Activated CD4-positive, alpha-beta T cell treated with anti-CD3 and anti-CD28 coated beads, Interleukin-2, amount 10 ng/mL, durations not matched to agents 24 days and 14 days (primary cell): ENCODE measurements at regions of chr5 and their contacts with region 1.

Region 1: DNA sequence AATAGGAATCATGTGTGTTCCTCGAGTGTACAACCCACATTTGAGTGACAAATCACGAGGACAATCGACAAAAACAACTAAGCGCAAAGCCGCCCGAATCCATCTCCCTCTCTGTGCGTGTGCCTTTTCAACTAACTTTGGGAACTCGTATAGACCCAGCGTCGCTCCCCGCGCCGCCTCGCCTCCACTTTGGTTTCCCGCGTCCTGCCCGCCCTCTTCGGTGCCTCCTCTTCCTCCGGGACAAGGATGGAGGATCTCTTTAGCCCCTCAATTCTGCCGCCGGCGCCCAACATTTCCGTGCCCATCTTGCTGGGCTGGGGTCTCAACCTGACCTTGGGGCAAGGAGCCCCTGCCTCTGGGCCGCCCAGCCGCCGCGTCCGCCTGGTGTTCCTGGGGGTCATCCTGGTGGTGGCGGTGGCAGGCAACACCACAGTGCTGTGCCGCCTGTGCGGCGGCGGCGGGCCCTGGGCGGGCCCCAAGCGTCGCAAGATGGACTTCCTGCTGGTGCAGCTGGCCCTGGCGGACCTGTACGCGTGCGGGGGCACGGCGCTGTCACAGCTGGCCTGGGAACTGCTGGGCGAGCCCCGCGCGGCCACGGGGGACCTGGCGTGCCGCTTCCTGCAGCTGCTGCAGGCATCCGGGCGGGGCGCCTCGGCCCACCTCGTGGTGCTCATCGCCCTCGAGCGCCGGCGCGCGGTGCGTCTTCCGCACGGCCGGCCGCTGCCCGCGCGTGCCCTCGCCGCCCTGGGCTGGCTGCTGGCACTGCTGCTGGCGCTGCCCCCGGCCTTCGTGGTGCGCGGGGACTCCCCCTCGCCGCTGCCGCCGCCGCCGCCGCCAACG is at the start of gene GPR150:
- DNase-seq: peak; percentile 90
- H3K4me3 Mint-ChIP-seq: peak within 1 kb of the TSS; percentile 91
- H3K27ac Mint-ChIP-seq: peak within 1 kb of the TSS; percentile 67
- H3K4me1 Mint-ChIP-seq: peaks cover 35% of the 10 kb centered on the region
- H3K27me3 Mint-ChIP-seq: peaks cover 16% of the 10 kb centered on the region
- total RNA-seq, gene GPR150: 0.33 and 0.56 TPM in 2 replicates

Region 2: DNA sequence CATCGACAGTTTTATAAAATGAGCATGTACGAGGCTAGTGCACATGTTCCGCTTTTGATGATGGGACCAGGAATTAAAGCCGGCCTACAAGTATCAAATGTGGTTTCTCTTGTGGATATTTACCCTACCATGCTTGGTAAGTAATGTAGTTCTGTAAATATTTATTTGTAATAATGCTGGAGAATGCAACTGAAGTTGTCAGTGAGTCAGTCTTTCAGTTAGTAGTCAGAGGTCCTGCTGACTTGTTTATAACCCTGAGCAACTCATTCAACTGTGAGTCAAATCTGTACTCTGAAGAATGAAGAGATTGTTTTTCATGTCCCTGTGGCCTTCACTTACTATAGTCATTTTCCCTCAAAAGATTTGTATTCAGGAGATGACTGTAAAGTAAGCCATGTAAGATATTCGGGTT is 28.8 kb before region 1 on chr5:
- intact Hi-C with region 1: loop called (anchors 1 kb)
- DNase-seq: no peak
- H3K4me3 Mint-ChIP-seq: no peak overlapping the region
- H3K27ac Mint-ChIP-seq: peak overlapping the region; percentile 39
- H3K4me1 Mint-ChIP-seq: peaks cover 20% of the 10 kb centered on the region
- H3K27me3 Mint-ChIP-seq: no peaks in the 10 kb centered on the region

Region 3: DNA sequence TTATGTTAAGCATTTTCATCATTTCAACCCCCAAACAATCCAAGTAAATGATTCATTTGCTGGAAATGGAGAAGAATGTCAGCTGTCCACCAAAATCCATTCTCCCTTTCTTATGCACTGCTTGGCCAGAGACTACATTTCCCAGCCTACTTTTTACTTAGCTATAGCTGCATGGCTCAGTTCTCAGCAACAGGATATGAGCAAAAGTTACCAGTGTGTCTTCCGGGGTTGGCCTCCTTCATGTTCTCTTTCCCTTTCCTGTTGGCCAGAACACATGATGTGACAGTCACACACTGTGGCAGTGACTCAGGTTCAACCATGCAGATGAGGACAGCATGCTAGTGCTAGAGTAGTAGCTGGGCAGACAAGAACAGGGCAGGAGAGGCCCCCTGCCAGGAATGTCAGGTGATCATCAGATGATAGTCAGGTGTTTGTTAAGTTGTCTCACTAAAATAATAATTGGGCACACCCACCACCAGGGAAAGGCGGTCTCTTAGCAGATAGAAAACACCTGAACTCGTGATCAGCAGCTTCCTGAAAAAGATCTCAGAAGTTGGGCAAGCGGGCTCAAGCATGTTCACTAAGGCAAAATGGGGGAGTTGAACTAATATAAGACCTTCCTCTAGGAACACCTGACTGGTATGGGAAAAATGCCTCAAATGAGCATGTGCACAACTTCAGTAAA is 11.9 kb after region 1 on chr5:
- intact Hi-C with region 1: loop called (anchors 1 kb)
- DNase-seq: peak; percentile 88
- H3K4me3 Mint-ChIP-seq: peak overlapping the region; percentile 28
- H3K27ac Mint-ChIP-seq: peak overlapping the region; percentile 92
- H3K4me1 Mint-ChIP-seq: peaks cover 14% of the 10 kb centered on the region
- H3K27me3 Mint-ChIP-seq: peaks cover 9% of the 10 kb centered on the region

Region 4: DNA sequence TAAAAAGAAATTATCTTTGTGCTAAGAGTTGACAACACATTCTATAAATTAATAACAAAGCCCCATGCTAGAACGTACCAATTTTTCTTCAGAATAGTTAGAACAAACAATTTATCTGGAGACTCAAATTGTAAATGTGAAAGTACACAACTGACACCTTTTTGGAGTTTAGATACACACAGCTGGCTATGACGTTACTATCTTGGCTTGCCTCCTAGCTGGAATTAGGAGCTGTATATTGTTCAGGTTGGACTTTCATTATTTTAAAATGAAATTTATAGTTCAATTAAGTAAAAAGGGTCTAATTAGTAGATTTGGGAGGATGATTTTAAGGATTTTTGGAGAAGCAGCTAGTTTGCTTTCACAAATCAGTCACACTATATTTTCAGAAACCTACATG is 1956.7 kb after region 1 on chr5:
- intact Hi-C with region 1: no loop called
- DNase-seq: no peak
- H3K4me3 Mint-ChIP-seq: no peak overlapping the region
- H3K27ac Mint-ChIP-seq: no peak overlapping the region
- H3K4me1 Mint-ChIP-seq: no peaks in the 10 kb centered on the region
- H3K27me3 Mint-ChIP-seq: no peaks in the 10 kb centered on the region